ENCODE measurements at regions of chr15 and their contacts with region 1.

Region 1: GRCh38 chr15:73964736-73965093 is 27.4 kb downstream of the STOML1 start:
- H3K4me3 ChIP-seq: no peak overlapping the region
- H3K27ac ChIP-seq: no peak overlapping the region
- H3K4me1 ChIP-seq: peaks cover 3% of the 10 kb centered on the region; the same call in 1 of the 2 replicates
- CTCF ChIP-seq: peak; percentile 98

Region 2: GRCh38 chr15:73936181-73936580 is 28.5 kb before region 1 on chr15:
- CTCF ChIA-PET with region 1: interaction called, 10 read pairs
- POLR2A ChIA-PET with region 1: no interaction called
- H3K4me3 ChIP-seq: no peak overlapping the region
- H3K27ac ChIP-seq: no peak overlapping the region
- H3K4me1 ChIP-seq: peaks cover 3% of the 10 kb centered on the region; the same call in 1 of the 2 replicates
- CTCF ChIP-seq: 0 out of 2 replicates have a peak, but pooled peaks have one; percentile 15

Region 3: GRCh38 chr15:73950831-73951561 is 13.7 kb before region 1 on chr15:
- CTCF ChIA-PET with region 1: interaction called, 276 read pairs
- POLR2A ChIA-PET with region 1: interaction called, 4 read pairs
- H3K4me3 ChIP-seq: no peak overlapping the region
- H3K27ac ChIP-seq: no peak overlapping the region; the same call in 1 of the 2 replicates
- H3K4me1 ChIP-seq: peaks cover 6% of the 10 kb centered on the region; the same call in 1 of the 2 replicates
- CTCF ChIP-seq: peak; percentile 93

Measured in HEK293 (cell line).